ENCODE measurements at regions of chr17 and their contacts with region 1.

Region 1: DNA sequence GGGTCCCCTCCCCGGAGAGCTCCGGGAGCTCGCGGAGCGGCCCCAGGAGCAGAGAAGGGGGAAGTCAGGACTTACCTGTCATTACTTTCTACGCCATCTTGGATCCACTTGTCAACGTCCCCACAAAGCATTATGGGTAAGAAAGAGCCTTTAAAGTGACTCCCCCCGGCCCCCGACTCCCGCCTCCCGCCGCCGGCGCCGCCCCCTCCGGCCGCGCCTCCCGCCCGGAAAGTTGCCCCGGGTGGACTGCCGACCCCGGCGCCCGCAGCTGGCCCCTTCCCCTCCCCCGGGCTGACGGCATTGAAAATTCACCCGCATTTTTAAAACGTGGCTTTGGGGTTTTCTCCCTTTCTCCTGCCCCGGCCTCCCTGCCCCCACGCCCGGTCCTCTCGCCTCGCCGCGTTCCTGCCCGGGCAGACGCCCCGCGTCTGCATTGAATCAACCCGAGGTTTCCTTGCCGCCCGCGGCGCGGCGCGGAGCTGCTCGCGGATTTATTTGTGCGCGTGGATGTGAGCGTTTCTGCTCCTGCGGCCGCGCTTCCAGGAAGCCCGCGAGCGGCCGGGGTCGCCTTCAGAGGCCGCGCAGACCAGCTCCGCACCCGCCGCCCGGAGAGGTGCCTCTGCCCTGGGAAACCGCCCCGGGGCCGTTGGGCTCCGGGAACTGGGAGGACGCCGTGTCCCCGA is at the start of gene HELZ:
- DNase-seq: peak; percentile 72
- ATAC-seq: peak; percentile 85
- H3K4me3 Mint-ChIP-seq: peak within 1 kb of the TSS; percentile 91
- H3K27ac Mint-ChIP-seq: peak within 1 kb of the TSS; percentile 85
- H3K4me1 Mint-ChIP-seq: peaks cover 42% of the 10 kb centered on the region
- H3K27me3 Mint-ChIP-seq: peaks cover 4% of the 10 kb centered on the region
- CTCF ChIP-seq: no peak
- total RNA-seq, gene HELZ: 55.0 and 69.7 TPM in 2 replicates

Region 2: DNA sequence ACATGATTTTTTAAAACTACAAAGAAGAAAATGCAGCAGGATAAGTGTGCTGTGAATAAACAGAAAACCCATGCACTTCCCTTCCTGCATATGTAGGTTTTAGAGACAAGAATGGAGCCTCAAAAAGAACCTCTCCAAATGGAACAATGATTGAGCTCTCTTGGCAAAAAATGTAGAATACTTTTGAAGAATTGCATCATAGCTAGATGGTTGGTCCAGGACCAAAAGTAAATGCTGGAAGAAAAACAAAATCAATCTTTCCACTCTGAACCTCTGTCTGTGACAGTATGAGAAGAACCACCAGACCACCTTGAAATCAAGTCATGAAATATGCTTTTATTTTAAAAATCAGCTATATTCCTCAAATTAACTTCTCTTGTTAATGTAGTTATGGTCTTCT is 17.7 kb before region 1 on chr17:
- CTCF ChIA-PET with region 1: no interaction called
- POLR2A ChIA-PET with region 1: no interaction called
- intact Hi-C with region 1: no loop called
- DNase-seq: no peak
- ATAC-seq: no peak
- H3K4me3 Mint-ChIP-seq: no peak overlapping the region
- H3K27ac Mint-ChIP-seq: no peak overlapping the region
- H3K4me1 Mint-ChIP-seq: peaks cover 7% of the 10 kb centered on the region
- H3K27me3 Mint-ChIP-seq: no peaks in the 10 kb centered on the region
- CTCF ChIP-seq: no peak

Region 3: DNA sequence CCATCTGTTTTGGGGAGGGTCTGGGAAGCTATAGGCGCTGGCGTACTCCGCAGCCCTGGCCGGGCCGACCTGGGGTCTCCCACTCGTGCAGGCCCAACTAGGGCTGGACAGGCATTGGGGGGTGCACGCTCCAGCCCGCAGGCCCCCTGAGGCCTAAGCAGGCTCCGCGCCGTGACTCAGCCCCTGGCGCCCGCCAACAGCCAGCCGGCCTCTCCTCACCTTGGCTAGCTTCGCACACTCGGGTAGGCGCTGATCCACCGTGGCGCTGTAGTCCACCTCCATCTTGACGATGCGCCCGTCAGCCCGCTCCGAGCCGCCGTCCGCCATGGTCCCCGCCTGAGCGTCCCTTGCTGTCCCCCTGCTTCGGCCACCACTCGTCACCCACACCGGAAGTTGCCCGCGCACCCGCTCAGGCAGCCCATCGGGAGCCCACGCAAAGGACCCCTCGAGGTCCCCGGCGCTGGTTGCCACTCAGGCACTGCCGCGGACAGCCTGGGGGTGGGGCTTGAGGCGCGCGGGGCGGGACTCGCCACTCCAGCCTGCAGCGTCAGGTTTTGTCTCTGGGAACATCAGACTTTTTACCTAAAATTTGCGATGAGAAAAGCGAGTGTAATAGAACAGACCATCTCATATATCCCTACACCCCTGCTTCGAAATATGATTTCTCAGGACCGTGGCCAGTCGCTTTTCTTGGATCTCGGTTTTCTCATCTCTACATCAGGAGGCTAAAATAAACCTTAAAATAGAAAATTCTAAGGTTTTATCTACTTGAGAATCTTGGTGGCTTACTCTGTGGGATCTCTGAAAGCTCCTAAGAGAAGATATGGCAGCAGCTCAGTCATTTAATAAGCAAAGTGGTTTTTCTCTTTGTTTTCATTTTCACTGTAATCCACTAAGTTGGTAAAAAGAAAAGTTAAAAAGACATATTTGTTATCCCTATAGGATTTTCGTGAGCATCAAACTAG is 121.3 kb after region 1 on chr17 and contains the start of gene PSMD12:
- CTCF ChIA-PET with region 1: no interaction called
- POLR2A ChIA-PET with region 1: no interaction called
- intact Hi-C with region 1: loop called (anchors 1 kb)
- DNase-seq: peak; percentile 94
- ATAC-seq: peak; percentile 98
- H3K4me3 Mint-ChIP-seq: peak within 1 kb of the TSS; percentile 91
- H3K27ac Mint-ChIP-seq: peak within 1 kb of the TSS; percentile 87
- H3K4me1 Mint-ChIP-seq: peaks cover 40% of the 10 kb centered on the region
- H3K27me3 Mint-ChIP-seq: no peaks in the 10 kb centered on the region
- CTCF ChIP-seq: no peak
- total RNA-seq, gene PSMD12: 47.3 and 54.6 TPM in 2 replicates